PC-9 (cell line): ENCODE measurements at regions of chr1 and their contacts with region 1.

Region 1: GRCh38 chr1:158124999-158125398 is 55.7 kb upstream of the CD1D start:
- DNase-seq: peak; percentile 71 to 74
- H3K4me3 ChIP-seq: no peak overlapping the region
- H3K27ac ChIP-seq: no peak overlapping the region
- H3K4me1 ChIP-seq: no peaks in the 10 kb centered on the region
- H3K27me3 ChIP-seq: peaks cover 18% of the 10 kb centered on the region
- CTCF ChIP-seq: peak; percentile 97

Region 2: DNA sequence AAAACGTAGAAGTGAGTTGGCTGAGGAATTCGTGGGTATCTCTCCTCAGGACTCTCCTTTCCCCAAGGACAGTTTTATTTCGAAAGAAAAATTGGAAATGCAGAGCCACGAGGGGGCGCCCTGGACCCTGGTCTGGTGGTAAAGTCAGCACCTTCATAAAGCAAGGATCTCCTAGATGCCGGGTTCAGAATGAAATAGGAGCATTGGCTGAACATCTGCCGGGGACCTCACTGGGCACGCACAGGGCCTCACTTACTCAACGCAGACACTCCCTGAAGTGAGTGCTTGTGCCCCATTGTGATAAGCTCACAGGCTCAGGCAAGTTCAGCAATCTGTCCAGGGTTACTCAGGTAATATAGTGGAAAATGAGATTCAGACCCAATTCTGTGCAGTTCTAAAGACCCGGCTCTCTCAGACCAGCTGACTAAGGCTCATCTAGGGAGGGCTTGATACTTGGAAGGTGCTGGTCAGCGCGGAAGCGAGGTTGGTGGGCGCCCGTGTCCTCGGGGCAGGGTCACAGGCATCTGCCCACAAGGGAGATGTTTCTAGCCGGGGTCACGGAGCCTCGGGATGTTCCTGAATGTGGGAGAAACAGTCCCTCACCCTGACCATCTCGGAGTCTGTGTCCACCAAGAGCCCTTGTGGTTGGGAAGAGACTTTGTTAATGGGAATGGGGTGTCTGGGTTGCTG is 931.2 kb before region 1 on chr1:
- CTCF ChIA-PET with region 1: no interaction called
- POLR2A ChIA-PET with region 1: no interaction called
- intact Hi-C with region 1: loop called (anchors 5 kb)
- DNase-seq: peak in 1 of 2 experiments; percentile 56
- H3K4me3 ChIP-seq: no peak overlapping the region
- H3K27ac ChIP-seq: no peak overlapping the region
- H3K4me1 ChIP-seq: no peaks in the 10 kb centered on the region
- H3K27me3 ChIP-seq: peaks cover 68% of the 10 kb centered on the region
- CTCF ChIP-seq: peak; percentile 79

Region 3: DNA sequence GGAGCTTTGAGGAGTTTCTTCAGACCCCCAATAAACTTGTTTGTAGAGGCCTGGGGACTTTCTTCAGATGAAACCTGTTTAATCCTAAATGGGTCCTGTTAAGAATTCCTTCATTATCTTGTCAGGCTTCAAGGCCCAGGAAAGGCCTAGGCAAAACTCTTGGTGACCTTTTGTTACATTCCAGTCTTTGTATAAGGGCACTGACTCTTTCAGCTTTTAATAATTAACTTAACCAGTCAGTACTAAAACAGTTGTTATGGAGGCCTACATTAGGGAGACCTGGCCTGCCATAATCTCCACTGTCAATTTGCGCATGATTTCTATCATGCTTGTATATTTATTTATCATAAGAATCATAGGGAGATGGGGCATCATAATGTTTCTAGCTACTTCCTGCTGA is 682.9 kb before region 1 on chr1:
- CTCF ChIA-PET with region 1: interaction called, 14 read pairs
- POLR2A ChIA-PET with region 1: no interaction called
- intact Hi-C with region 1: no loop called
- DNase-seq: no peak
- H3K4me3 ChIP-seq: no peak overlapping the region
- H3K27ac ChIP-seq: no peak overlapping the region
- H3K4me1 ChIP-seq: no peaks in the 10 kb centered on the region
- H3K27me3 ChIP-seq: no peaks in the 10 kb centered on the region
- CTCF ChIP-seq: no peak

Region 4: GRCh38 chr1:157878059-157878458 is 246.9 kb before region 1 on chr1:
- CTCF ChIA-PET with region 1: interaction called, 5 read pairs
- POLR2A ChIA-PET with region 1: no interaction called
- intact Hi-C with region 1: loop called (anchors 1 kb)
- DNase-seq: no peak
- H3K4me3 ChIP-seq: no peak overlapping the region
- H3K27ac ChIP-seq: no peak overlapping the region
- H3K4me1 ChIP-seq: no peaks in the 10 kb centered on the region
- H3K27me3 ChIP-seq: peaks cover 5% of the 10 kb centered on the region; the same call in 1 of the 2 replicates
- CTCF ChIP-seq: peak; percentile 43

Region 5: GRCh38 chr1:157969697-157970485 is 155.1 kb before region 1 on chr1:
- CTCF ChIA-PET with region 1: interaction called, 26 read pairs
- POLR2A ChIA-PET with region 1: no interaction called
- intact Hi-C with region 1: loop called (anchors 1 kb)
- DNase-seq: peak; percentile 45 to 49
- H3K4me3 ChIP-seq: no peak overlapping the region
- H3K27ac ChIP-seq: no peak overlapping the region
- H3K4me1 ChIP-seq: no peaks in the 10 kb centered on the region
- H3K27me3 ChIP-seq: peaks cover 22% of the 10 kb centered on the region; the same call in 1 of the 2 replicates
- CTCF ChIP-seq: peak; percentile 77

Region 6: DNA sequence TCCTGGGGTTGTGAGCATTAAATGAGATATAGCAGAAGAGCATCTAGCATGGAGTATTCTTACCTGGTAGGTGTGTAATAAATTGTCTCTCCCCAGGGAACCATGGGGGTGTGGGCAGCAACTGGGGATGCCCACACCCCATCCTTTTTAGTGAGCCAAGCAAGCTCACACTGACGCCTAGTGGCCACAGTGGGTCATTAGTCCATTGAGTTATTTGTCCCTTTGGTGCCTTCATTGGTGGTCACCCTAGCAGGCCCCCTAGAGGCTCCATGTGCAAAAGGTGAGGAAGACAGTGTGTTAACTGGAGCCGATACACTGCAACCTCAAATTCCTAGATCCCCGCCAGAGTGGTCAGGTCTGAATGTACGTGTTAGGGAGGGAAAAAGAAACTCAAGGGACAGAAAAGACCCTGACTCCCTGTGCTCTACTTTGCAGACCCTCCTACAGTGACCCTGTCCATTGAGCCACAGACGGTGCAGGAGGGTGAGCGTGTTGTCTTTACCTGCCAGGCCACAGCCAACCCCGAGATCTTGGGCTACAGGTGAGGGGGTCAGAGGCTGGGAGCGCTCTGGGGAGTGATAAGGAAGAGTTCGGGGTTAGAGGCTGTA is 37.6 kb before region 1 on chr1:
- CTCF ChIA-PET with region 1: interaction called, 3 read pairs
- POLR2A ChIA-PET with region 1: no interaction called
- intact Hi-C with region 1: loop called (anchors 2 kb)
- DNase-seq: peak; percentile 51 to 56
- H3K4me3 ChIP-seq: no peak overlapping the region
- H3K27ac ChIP-seq: no peak overlapping the region
- H3K4me1 ChIP-seq: no peaks in the 10 kb centered on the region
- H3K27me3 ChIP-seq: no peaks in the 10 kb centered on the region
- CTCF ChIP-seq: peak; percentile 96